Activated CD4-positive, alpha-beta T cell treated with anti-CD3 and anti-CD28 coated beads, Interleukin-2, amount 10 ng/mL, durations not matched to agents 24 days and 14 days (primary cell): ENCODE measurements at regions of chr13 and their contacts with region 1.

Region 1: GRCh38 chr13:114128624-114129522 is 3.5 kb downstream of the RASA3 start:
- DNase-seq: peak; percentile 96
- H3K4me3 Mint-ChIP-seq: peak overlapping the region; percentile 99
- H3K27ac Mint-ChIP-seq: peak overlapping the region; percentile 89
- H3K4me1 Mint-ChIP-seq: peaks cover 63% of the 10 kb centered on the region
- H3K27me3 Mint-ChIP-seq: peaks cover 2% of the 10 kb centered on the region

Region 2: DNA sequence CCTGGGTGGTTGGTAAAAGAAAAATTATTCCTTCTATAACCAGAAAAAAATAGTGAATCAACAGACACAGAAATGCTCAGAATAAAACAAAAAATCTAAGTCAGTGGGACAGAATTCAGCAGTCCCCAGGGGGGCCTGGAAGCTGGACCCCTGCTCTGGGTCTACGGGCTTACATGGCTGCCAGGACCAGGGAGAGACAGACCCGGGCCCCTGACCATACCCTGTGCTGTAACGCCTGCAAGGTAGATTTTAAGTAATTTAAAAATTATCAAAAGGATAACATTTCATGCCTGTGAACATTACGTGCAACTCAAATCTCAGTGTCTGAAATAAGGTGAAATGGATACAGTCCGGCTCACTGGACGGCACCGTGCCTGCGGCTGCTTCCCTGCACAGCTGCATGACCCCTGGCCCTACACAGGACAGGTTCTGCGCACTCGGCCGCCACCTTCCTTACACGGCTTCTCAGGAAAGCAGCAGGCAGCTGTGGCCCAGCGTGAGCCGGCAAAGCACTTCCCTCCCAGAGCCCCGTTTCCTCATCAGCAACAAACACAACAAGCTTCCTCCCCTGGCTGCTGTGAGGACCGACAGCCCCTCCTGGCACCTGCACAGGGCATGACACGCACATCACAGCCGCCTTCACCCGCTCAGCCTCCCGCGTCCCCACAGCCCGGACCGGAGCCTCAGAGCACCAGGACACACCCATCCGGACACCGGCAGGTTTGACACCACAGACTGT is 18.6 kb before region 1 on chr13:
- intact Hi-C with region 1: loop called (anchors 2 kb)
- DNase-seq: peak; percentile 91
- H3K4me3 Mint-ChIP-seq: peak overlapping the region; percentile 88
- H3K27ac Mint-ChIP-seq: peak overlapping the region; percentile 94
- H3K4me1 Mint-ChIP-seq: peaks cover 44% of the 10 kb centered on the region
- H3K27me3 Mint-ChIP-seq: no peaks in the 10 kb centered on the region

Region 3: GRCh38 chr13:114140906-114141250 is 12.0 kb after region 1 on chr13:
- intact Hi-C with region 1: loop called (anchors 1 kb)
- DNase-seq: peak; percentile 81
- H3K4me3 Mint-ChIP-seq: no peak overlapping the region
- H3K27ac Mint-ChIP-seq: no peak overlapping the region
- H3K4me1 Mint-ChIP-seq: peaks cover 21% of the 10 kb centered on the region
- H3K27me3 Mint-ChIP-seq: peaks cover 4% of the 10 kb centered on the region

Region 4: GRCh38 chr13:114148521-114148855 is 19.6 kb after region 1 on chr13:
- intact Hi-C with region 1: loop called (anchors 1 kb)
- DNase-seq: peak; percentile 97
- H3K4me3 Mint-ChIP-seq: peak overlapping the region; percentile 77
- H3K27ac Mint-ChIP-seq: peak overlapping the region; percentile 88
- H3K4me1 Mint-ChIP-seq: peaks cover 78% of the 10 kb centered on the region
- H3K27me3 Mint-ChIP-seq: no peaks in the 10 kb centered on the region